SK-N-SH (cell line): ENCODE measurements at regions of chrX and their contacts with region 1.

Region 1: DNA sequence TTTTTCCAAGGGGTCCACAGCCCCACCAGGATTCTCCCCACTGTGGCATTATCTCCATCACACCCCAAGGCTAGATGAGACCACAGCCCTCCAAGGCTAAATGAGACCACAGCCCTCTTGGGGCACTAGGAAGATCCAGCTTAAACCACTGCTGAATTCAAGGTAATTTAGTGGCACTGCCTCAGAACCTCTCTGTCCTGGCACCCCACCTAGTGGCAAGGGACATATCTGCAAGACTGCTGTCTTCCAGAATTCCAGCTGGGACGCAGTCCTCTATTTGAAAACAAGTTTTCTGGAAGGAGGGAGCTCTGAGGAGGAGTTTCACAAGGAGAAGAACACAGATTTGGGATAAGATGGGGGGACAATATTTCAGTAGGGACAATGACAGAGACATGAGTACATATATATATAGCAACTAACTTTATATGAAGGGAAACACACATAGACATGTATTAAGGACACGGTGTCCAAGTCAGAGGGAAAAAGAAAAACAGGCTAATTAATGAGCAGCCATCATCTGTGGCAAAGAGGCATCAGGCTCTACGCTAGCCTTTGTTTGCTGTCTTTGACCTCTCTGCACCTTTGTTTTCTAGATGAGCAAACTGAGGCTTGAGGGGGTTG is 9.3 kb downstream of the CETN2 start:
- DNase-seq: peak; percentile 49
- H3K4me3 ChIP-seq: no peak overlapping the region
- H3K27ac ChIP-seq: no peak overlapping the region
- H3K4me1 ChIP-seq: no peaks in the 10 kb centered on the region; a peak in 1 of 4 replicates
- H3K27me3 ChIP-seq: no peaks in the 10 kb centered on the region
- CTCF ChIP-seq: peak; percentile 69
- EP300 ChIP-seq: no peak
- RAD21 ChIP-seq: peak; percentile 75

Region 2: GRCh38 chrX:152641996-152642395 is 179.3 kb before region 1 on chrX:
- CTCF ChIA-PET with region 1: interaction called, 78 read pairs
- POLR2A ChIA-PET with region 1: no interaction called
- DNase-seq: peak; percentile 46
- H3K4me3 ChIP-seq: no peak overlapping the region
- H3K27ac ChIP-seq: no peak overlapping the region
- H3K4me1 ChIP-seq: no peaks in the 10 kb centered on the region; a peak in 1 of 4 replicates
- H3K27me3 ChIP-seq: no peaks in the 10 kb centered on the region; the same call in 1 of the 2 replicates
- CTCF ChIP-seq: peak; percentile 42
- EP300 ChIP-seq: no peak
- RAD21 ChIP-seq: peak; percentile 61

Region 3: DNA sequence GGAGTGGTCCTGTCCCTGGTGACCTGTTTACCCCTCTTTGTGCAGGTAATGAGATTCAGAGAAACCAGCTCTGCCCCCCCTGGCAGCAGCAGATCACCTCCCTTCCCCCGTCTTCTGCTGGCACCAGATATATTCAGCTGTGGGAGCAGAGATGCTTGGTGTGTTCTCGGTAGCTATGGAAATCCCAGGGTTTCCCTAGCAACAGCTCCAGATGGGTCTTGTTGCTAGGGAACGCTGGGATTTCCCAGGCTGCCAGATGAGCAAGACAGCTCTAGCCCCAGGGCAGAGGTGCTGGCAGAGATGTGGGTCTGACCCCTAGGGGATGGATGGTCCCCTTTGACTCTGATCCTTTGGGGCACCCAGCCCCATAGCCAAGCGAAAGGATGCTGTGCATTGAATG is 10.9 kb before region 1 on chrX:
- CTCF ChIA-PET with region 1: interaction called, 49 read pairs
- POLR2A ChIA-PET with region 1: no interaction called
- DNase-seq: peak; percentile 64
- H3K4me3 ChIP-seq: no peak overlapping the region
- H3K27ac ChIP-seq: no peak overlapping the region
- H3K4me1 ChIP-seq: peaks cover 0 to 10% of the 10 kb centered on the region in 2 experiments; a peak in 2 of 4 replicates
- H3K27me3 ChIP-seq: no peaks in the 10 kb centered on the region
- CTCF ChIP-seq: no peak
- EP300 ChIP-seq: no peak
- RAD21 ChIP-seq: no peak